AG04450 (cell line): ENCODE measurements at regions of chr5 and their contacts with region 1.

Region 1: DNA sequence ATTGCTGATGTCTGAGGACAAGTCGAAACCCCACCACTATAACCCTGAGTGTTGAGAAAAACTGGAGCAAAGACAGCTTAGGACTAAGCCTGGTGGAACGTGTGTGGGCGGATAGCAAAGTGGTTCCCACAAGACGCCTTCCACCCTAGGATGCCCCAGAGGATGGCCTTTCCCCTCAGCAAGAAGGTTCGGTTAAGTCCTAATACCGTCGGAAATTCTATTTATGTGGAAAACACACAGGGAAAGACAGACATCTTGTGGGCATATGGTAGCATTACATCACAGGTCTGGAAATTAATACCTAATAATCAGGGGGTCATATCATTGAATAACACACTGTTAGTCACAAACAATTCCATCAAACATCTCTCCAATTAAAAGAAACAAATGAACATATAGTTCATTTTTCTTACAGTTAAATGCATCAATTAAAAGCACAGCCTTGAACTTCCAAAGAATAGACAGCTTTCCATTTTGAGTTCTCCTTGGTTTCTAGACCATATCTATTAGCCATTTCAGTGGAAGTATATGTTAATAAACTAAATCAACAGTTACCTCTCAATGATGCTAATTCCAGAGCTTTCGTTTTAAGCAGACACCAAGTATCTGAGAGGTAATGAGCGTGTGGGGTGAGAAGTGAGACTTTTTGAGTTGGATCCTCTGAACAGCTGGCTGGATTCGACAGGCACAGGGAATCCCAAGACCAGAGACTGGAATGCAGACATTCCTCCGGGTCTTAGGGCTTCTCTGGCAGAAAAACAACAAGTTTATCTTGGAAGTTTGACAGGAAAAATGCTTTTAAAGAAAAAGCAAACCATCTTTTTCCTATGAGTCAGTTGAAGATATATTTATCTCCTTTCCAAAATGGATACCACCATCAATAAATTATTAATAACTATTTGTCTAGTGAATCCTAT is 2.9 kb upstream of the ICE1 start:
- DNase-seq: peak; percentile 50
- H3K4me3 ChIP-seq: no peak overlapping the region; the same call in 1 of the 2 replicates
- H3K27ac ChIP-seq: no peak overlapping the region
- H3K27me3 ChIP-seq: no peaks in the 10 kb centered on the region
- CTCF ChIP-seq: peak; percentile 84

Region 2: GRCh38 chr5:5141625-5142532 is 277.7 kb before region 1 on chr5:
- CTCF ChIA-PET with region 1: interaction called, 53 read pairs
- POLR2A ChIA-PET with region 1: no interaction called
- DNase-seq: peak; percentile 10
- H3K4me3 ChIP-seq: no peak overlapping the region
- H3K27ac ChIP-seq: no peak overlapping the region
- H3K27me3 ChIP-seq: peaks cover 5% of the 10 kb centered on the region
- CTCF ChIP-seq: peak; percentile 67

Region 3: GRCh38 chr5:5398046-5398445 is 21.5 kb before region 1 on chr5:
- CTCF ChIA-PET with region 1: interaction called, 11 read pairs
- POLR2A ChIA-PET with region 1: no interaction called
- DNase-seq: no peak
- H3K4me3 ChIP-seq: no peak overlapping the region
- H3K27ac ChIP-seq: no peak overlapping the region
- H3K27me3 ChIP-seq: no peaks in the 10 kb centered on the region
- CTCF ChIP-seq: no peak

Region 4: GRCh38 chr5:5409151-5409810 is 10.3 kb before region 1 on chr5:
- CTCF ChIA-PET with region 1: interaction called, 11 read pairs
- POLR2A ChIA-PET with region 1: no interaction called
- DNase-seq: no peak
- H3K4me3 ChIP-seq: no peak overlapping the region
- H3K27ac ChIP-seq: no peak overlapping the region
- H3K27me3 ChIP-seq: no peaks in the 10 kb centered on the region
- CTCF ChIP-seq: no peak